Calu3 (cell line): ENCODE measurements at regions of chr10 and their contacts with region 1.

Region 1: DNA sequence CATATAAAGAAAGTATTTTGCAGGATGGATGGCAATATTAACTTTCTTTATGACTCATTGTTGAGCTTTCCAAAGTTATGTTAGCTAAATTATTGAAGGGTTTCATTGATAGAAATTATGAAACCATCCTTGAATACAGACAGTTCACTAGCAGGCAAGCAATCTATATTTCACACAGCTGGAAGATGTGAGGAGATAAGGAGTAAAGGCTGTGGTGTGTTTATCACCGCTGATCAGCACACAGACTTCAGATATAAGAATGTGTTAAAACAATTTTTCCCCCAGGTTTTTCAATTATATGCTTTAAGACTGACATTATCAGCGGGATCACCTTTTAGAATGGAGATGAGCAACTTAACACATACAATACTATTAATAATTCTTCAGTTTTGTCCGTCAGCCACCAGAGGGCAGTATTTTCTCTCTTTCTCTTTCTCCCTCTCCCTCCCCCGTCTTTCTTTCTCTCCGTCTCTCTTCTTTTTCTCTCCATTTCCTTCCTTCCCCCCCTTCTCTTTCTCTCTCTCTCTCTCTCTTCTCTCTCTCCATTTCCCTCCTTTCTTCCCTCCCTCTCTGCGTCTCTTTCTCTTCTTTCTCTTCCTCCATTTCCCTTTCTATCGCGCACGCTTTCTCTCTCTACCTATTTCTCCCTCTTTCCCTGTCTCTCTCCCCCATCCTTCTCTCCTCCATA is 62.9 kb upstream of the FAM171A1 start:
- DNase-seq: peak; percentile 58
- H3K4me3 Mint-ChIP-seq: peak overlapping the region; percentile 40
- H3K27ac Mint-ChIP-seq: no peak overlapping the region
- H3K4me1 Mint-ChIP-seq: no peaks in the 10 kb centered on the region
- H3K27me3 Mint-ChIP-seq: peaks cover 19% of the 10 kb centered on the region
- CTCF ChIP-seq: peak; percentile 77

Region 2: GRCh38 chr10:15558136-15558535 is 124.1 kb after region 1 on chr10:
- CTCF ChIA-PET with region 1: no interaction called
- intact Hi-C with region 1: loop called (anchors 10 kb)
- DNase-seq: no peak
- H3K4me3 Mint-ChIP-seq: no peak overlapping the region
- H3K27ac Mint-ChIP-seq: no peak overlapping the region
- H3K4me1 Mint-ChIP-seq: no peaks in the 10 kb centered on the region
- H3K27me3 Mint-ChIP-seq: peaks cover 30% of the 10 kb centered on the region
- CTCF ChIP-seq: no peak

Region 3: GRCh38 chr10:15725603-15726002 is 291.6 kb after region 1 on chr10:
- CTCF ChIA-PET with region 1: no interaction called
- intact Hi-C with region 1: loop called (anchors 1 kb)
- DNase-seq: peak; percentile 25
- H3K4me3 Mint-ChIP-seq: no peak overlapping the region
- H3K27ac Mint-ChIP-seq: no peak overlapping the region
- H3K4me1 Mint-ChIP-seq: no peaks in the 10 kb centered on the region
- H3K27me3 Mint-ChIP-seq: peaks cover 14% of the 10 kb centered on the region
- CTCF ChIP-seq: peak; percentile 41